ENCODE measurements at regions of chr3 and their contacts with region 1.

Region 1: GRCh38 chr3:129942296-129942695 is 32.2 kb upstream of the TRH start:
- DNase-seq: peak; percentile 23
- H3K4me3 ChIP-seq: no peak overlapping the region
- H3K27ac ChIP-seq: no peak overlapping the region
- H3K27me3 ChIP-seq: peaks cover 20% of the 10 kb centered on the region
- CTCF ChIP-seq: peak; percentile 82

Region 2: DNA sequence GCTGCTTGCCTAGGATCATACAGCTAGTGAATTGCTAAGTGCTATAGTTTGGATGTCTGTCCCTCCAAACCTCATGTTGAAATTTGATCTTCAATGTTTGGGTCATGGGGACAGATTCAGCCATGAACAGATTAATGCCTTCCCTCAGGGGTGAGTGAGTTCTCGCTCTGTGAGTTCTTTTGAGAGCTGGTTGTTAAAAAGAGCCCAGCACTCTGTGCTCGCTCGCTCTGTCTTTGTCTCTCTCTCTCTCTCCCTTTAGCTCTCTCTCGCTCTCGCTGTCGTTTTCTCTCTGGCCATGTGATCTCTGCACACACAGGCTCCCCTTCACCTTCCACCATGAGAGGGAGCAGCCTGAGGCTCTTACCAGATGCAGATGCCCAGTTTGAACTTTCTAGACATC is 47.1 kb after region 1 on chr3:
- CTCF ChIA-PET with region 1: interaction called, 17 read pairs
- POLR2A ChIA-PET with region 1: no interaction called
- DNase-seq: no peak
- H3K4me3 ChIP-seq: no peak overlapping the region
- H3K27ac ChIP-seq: no peak overlapping the region
- H3K27me3 ChIP-seq: peaks cover 44% of the 10 kb centered on the region
- CTCF ChIP-seq: no peak

Region 3: DNA sequence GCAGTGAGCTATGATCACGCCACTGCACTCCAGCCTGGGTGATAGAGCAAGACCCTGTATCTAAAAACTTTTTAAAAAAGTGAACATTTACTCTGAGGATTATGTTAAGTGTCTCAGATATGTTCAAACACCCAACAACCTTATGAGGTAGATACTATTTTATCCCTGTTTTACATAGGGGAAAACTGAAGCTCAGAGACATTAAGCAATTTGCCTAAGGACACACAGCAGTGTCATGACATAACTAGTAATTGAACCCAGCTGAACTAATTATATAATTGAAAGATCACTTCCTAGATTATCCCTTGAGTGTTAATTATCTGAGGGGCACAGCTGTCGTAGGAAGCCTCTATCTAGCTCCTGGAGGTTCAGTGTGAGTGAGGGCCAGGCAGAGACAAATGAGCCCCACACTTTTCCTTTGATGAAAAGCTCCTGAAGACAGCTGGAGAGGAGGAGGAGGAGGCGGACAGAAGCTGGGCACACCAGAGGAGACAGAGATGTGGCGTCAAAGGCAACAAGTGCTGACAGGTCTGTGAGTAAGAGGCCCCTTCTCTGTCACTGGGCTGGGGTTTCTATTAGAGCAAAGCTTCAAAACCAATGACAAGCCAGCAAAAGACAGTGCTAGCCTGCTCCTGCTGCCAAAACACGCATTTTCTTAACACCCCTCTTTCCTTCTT is 52.7 kb after region 1 on chr3:
- CTCF ChIA-PET with region 1: interaction called, 17 read pairs
- POLR2A ChIA-PET with region 1: no interaction called
- DNase-seq: no peak
- H3K4me3 ChIP-seq: no peak overlapping the region
- H3K27ac ChIP-seq: no peak overlapping the region
- H3K27me3 ChIP-seq: peaks cover 48% of the 10 kb centered on the region
- CTCF ChIP-seq: no peak

Region 4: DNA sequence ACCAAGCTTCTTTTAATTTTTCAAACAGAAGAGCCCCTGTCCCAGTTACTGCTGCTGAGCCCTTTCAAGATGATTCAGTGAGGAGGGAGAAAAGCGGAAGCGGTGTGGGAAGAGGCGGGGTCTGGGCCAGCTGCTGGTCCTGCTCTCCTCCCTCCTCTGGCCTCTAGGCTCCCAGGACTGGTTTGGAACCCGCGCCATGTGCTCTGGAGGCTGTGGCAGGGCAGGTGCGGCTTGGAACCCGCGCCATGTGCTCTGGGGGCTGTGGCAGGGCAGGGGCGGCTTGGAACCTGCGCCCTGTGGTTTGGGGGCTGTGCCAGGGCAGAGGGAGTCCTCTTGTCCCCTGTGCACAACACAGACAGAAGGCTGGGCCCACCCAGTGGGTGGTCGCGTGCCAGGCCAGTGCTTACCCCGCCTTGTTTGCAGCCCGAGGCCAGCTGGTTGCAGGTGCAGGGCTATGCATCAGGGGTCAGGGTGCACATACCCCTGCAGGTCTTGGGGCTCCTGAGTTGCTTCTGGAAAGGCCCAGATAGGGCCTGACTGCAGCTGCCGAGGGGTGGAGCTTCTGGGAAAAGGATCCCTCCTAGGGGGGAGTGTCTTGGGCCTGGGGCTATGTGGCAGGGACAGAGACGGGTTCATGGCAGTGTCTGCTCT is 151.6 kb after region 1 on chr3:
- CTCF ChIA-PET with region 1: interaction called, 47 read pairs
- POLR2A ChIA-PET with region 1: no interaction called
- DNase-seq: no peak
- H3K4me3 ChIP-seq: no peak overlapping the region
- H3K27ac ChIP-seq: no peak overlapping the region
- H3K27me3 ChIP-seq: peaks cover 4% of the 10 kb centered on the region
- CTCF ChIP-seq: no peak

Region 5: GRCh38 chr3:130111185-130111864 is 169.0 kb after region 1 on chr3:
- CTCF ChIA-PET with region 1: interaction called, 68 read pairs
- POLR2A ChIA-PET with region 1: no interaction called
- DNase-seq: peak; percentile 98
- H3K4me3 ChIP-seq: peak overlapping the region; percentile 74
- H3K27ac ChIP-seq: peak overlapping the region; percentile 77
- H3K27me3 ChIP-seq: no peaks in the 10 kb centered on the region
- CTCF ChIP-seq: no peak

Measured in AG04450 (cell line).